HEK293 (cell line): ENCODE measurements at regions of chr6 and their contacts with region 1.

Region 1: GRCh38 chr6:52419809-52420670 is at the start of gene EFHC1:
- H3K4me3 ChIP-seq: peak within 1 kb of the TSS; percentile 66
- H3K27ac ChIP-seq: peak within 1 kb of the TSS; percentile 56; the same call in 1 of the 2 replicates
- H3K4me1 ChIP-seq: 0 out of 2 replicates have a peak, but pooled peaks cover 3% of the 10 kb centered on the region
- CTCF ChIP-seq: peak; percentile 31; the same call in 1 of the 2 replicates

Region 2: GRCh38 chr6:52341561-52342260 is 78.3 kb before region 1 on chr6:
- CTCF ChIA-PET with region 1: no interaction called
- POLR2A ChIA-PET with region 1: no interaction called
- H3K4me3 ChIP-seq: no peak overlapping the region
- H3K27ac ChIP-seq: no peak overlapping the region
- H3K4me1 ChIP-seq: no peaks in the 10 kb centered on the region
- CTCF ChIP-seq: no peak

Region 3: DNA sequence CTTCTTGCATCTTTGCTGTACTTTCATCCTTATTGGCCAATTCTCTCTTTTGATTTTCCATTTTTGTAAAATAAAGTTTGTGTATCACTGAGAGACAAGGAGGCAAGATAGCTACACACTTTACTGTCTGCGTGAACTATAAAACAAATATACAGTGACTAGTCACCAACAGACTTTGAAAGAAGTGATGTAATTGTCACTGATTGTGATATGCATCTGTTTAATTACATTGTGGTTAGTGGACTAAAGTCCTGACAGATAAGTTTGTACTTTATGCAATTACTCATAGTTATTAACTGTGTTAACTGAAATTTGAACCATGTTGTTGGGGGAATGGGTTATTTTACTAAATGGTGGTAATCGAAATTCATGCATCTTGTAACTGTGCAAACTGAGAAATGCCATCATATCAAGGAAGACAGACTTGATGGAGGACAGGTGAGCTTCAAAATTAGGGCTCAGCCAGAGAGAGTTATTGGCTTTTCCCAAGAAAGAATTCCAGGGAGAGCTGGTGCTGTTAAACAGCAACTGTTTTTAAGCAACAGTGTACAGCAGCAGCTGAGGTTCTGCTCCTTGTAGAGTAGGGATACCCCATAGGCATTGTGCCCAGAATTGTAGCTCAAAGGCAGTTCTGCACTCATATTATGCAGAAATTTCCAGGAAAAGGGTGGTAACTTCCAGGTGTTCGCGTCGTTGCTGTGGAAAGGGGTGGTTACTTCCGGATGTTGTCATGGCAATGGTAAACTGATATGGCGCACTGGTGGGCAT is 63.0 kb after region 1 on chr6:
- CTCF ChIA-PET with region 1: interaction called, 7 read pairs
- POLR2A ChIA-PET with region 1: interaction called, 10 read pairs
- H3K4me3 ChIP-seq: no peak overlapping the region
- H3K27ac ChIP-seq: no peak overlapping the region
- H3K4me1 ChIP-seq: peaks cover 10% of the 10 kb centered on the region; the same call in 1 of the 2 replicates
- CTCF ChIP-seq: no peak

Region 4: DNA sequence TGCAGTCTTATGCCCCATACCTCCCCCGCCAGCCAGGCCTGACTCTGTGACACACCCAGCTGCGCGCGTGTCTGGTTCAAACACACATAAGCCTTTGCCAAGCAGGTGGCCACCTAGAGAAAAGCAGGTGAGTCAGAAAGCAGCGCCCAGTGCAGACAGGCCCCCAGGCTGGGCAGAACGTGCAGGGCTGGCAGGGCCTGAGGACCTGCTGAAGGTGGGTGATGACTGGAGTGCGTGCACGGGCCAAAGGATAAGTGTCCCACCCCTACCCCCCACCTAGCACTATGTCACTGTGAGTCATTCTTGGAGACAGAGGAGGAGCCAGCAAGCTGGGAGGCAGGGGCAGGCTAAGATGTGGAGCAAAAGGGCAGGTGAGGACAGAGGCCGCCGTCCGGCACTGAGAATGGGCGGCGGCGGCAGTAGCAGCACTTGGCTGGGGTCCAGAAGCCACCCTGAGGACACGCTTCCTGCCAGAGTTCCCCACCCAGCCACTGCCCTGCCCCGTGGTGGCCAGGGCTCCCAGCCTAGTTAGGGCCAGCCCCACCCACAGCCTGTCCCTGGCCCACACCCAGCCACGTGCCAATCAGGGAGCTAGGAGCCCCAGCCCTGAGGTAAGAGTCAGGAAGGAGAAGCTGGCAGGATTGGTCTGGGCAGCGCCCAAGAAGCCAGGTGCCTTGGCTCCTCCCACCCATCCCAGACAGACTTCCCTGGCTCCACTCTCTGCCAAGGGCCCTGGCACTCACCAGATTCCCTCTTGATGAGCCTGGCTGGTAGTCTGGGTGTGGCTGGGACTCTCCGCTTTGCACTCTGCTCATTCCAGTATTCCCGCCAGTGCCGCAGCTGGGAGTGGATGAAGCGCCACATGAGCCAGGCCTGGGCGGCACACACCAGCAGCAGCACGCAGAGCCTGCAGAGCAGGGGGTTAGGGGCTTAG is 84.1 kb after region 1 on chr6:
- CTCF ChIA-PET with region 1: interaction called, 20 read pairs
- POLR2A ChIA-PET with region 1: interaction called, 9 read pairs
- H3K4me3 ChIP-seq: no peak overlapping the region; the same call in 1 of the 2 replicates
- H3K27ac ChIP-seq: peak overlapping the region; percentile 65
- H3K4me1 ChIP-seq: peaks cover 8% of the 10 kb centered on the region
- CTCF ChIP-seq: no peak

Region 5: DNA sequence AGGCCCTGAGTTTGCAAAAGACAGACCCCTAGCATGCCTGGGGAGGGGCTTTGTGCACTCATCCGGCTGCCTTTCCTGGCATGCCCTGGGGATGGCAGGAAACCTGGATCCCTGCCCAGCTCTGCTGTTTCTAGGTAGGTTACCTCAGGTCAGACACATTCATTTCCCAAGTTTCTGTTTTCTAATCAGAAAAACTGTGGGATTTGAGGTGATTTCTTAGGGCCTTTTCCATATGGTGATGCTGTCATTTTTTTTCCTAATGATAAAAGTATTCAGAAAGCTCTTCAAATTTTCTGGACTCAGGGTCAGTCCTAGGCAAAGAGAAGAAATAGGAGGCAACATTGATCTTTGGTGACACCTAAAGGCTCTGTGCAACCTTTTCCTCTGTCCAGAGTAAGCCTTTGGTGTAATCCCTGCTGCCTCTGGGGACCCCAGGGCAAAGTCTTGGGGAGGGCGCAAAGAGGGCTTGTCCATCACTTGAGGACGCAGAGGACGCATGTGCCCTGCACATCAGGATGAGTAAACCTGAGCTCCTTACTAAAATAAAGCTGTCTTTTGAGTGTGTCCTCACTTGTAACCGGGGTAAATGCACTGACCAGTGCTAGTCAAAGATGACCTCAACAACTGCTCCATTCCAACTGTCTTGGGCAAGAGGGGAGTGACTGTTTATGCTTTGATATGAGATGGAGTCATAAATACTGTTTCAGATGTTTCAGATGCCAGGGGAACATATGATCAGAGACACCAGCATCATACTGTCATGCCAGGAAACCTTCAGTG is 170.3 kb after region 1 on chr6:
- CTCF ChIA-PET with region 1: interaction called, 87 read pairs
- POLR2A ChIA-PET with region 1: interaction called, 10 read pairs
- H3K4me3 ChIP-seq: no peak overlapping the region
- H3K27ac ChIP-seq: no peak overlapping the region
- H3K4me1 ChIP-seq: peaks cover 6% of the 10 kb centered on the region
- CTCF ChIP-seq: no peak

Region 6: DNA sequence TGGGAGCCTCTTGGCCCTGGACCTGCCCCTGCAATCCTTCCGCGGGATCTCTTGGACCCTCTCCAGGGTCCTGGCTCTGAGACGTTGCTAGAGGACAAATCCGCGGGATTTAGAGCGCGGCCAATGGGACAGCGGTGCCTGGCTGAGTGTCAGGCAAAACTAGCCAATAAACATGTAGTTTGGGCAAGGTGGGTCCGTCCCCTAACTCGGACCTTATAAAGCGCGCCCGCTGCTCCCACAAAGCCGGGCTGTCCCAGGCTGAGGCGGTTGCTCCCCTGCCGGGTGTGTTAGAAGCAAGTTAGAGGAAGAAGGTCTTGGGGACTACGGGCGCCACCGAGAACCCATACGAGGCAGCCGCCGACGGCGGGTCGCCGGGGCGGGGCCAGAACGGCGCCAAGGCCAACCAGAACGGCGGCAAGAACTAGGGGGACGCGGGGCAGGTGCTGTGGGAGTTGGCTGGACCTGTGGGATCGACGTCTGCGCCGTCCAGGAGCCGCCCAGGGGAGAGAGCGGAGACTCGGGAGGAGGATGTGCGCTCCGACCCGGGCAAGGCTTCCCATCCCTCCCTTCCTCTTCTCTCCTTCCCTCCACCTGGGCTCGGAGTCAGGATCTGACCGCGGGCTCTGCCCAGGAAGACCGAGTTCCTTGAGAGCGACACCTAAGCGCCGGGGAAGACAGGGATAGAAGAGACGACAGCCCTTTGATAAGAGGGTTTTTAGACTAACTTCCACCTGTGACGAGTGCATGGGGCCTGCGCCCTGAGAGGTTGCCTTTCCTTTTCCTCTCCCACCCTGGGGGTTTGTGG is 244.3 kb after region 1 on chr6:
- CTCF ChIA-PET with region 1: interaction called, 104 read pairs
- POLR2A ChIA-PET with region 1: interaction called, 10 read pairs
- H3K4me3 ChIP-seq: peak overlapping the region; percentile 52
- H3K27ac ChIP-seq: peak overlapping the region; percentile 76
- H3K4me1 ChIP-seq: peaks cover 10% of the 10 kb centered on the region; the same call in 1 of the 2 replicates
- CTCF ChIP-seq: 0 out of 2 replicates have a peak, but pooled peaks have one; percentile 39